ENCODE measurements at regions of chr5 and their contacts with region 1.

Region 1: GRCh38 chr5:118987988-118988865 is at the start of gene DTWD2:
- DNase-seq: peak; percentile 93 to 95
- ATAC-seq: peak; percentile 98 to 99 (median 99)
- H3K4me3 ChIP-seq: peak within 1 kb of the TSS; percentile 90
- H3K27ac ChIP-seq: peak within 1 kb of the TSS; percentile 95
- H3K4me1 ChIP-seq: peaks cover 4% of the 10 kb centered on the region
- H3K27me3 ChIP-seq: no peaks in the 10 kb centered on the region
- CTCF ChIP-seq: peak; percentile 85
- total RNA-seq, gene DTWD2: 5.5 to 9.3 (median 6.8) TPM

Region 2: DNA sequence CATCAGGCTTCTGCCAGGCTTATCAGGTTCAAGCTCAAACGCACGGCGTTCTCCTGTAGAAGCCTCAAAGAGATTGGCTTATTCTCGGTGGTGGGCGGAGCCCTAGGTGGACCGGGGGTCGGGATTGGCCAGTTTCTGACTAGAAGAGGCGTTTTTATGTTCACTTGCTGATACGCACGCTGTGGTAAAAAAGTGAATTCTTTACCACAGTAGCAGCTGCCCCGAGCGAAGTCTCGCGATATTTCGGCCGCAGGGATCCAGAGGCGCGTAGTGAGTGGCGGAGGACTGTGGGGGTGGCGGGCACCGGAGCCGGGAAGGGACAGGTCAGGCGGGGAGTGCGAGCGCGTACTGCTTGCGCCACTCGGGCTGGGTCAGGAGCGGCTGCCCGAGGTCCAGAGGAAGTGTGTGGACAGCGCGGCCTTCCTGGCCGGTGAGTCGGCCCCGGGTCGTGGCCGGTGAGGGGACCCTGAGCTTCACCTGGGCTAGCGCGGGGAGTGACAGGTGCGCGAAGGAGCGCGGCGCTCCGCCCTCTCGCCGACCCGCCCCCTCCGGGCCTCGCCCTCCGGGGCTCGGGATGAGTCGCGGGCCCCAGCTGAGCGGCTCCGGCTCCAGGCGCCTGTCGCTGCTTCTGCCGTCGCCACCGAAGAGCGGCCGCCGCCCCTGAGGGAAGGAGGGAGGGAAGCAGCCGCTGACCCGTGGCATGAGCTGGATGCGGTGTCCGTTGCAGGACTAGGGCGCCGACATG is 82.8 kb after region 1 on chr5 and contains the start of gene DMXL1:
- intact Hi-C with region 1: loop called in 1 of 2 experiments (anchors 5 kb)
- DNase-seq: peak; percentile 99 to 100
- ATAC-seq: peak; percentile 94 to 96 (median 96)
- H3K4me3 ChIP-seq: peak within 1 kb of the TSS; percentile 87
- H3K27ac ChIP-seq: peak within 1 kb of the TSS; percentile 98
- H3K4me1 ChIP-seq: peaks cover 30% of the 10 kb centered on the region
- H3K27me3 ChIP-seq: no peaks in the 10 kb centered on the region
- CTCF ChIP-seq: no peak
- total RNA-seq, gene DMXL1: 15.7 to 21.7 (median 18.3) TPM

Region 3: DNA sequence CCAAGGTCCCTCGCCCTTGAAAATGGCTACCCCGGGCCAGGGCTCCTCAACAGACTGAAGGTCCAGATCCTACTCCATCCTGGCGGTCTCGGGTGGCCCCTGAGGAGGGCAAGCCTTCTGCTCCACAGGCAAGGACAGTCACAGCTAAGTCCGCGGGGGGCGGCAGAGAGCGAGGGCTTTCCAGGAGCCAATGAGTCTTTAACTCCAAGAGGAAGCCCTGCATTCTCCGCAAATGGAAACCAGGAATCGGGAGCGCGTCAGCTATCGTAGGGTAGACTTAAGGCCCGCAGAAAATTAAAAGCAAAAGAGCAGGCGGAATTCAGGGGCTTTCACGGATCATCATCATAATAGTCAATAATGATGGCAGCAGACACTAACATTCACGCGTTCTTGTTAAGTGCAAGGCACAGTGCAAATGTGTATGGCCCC is 279.7 kb after region 1 on chr5:
- intact Hi-C with region 1: loop called in 1 of 2 experiments (anchors 5 kb)
- DNase-seq: peak; percentile 92 to 93
- ATAC-seq: peak; percentile 95
- H3K4me3 ChIP-seq: peak overlapping the region; percentile 83
- H3K27ac ChIP-seq: peak overlapping the region; percentile 80
- H3K4me1 ChIP-seq: peaks cover 3% of the 10 kb centered on the region
- H3K27me3 ChIP-seq: no peaks in the 10 kb centered on the region
- CTCF ChIP-seq: peak; percentile 33

Region 4: GRCh38 chr5:119411935-119412602 is 423.8 kb after region 1 on chr5:
- intact Hi-C with region 1: loop called (anchors 2 to 5 kb)
- DNase-seq: peak; percentile 18 to 58
- ATAC-seq: peak; percentile 89 to 99 (median 93)
- H3K4me3 ChIP-seq: peak overlapping the region; percentile 64
- H3K27ac ChIP-seq: no peak overlapping the region
- H3K4me1 ChIP-seq: no peaks in the 10 kb centered on the region
- H3K27me3 ChIP-seq: no peaks in the 10 kb centered on the region
- CTCF ChIP-seq: peak; percentile 94